AG04449 (cell line): ENCODE measurements at regions of chr21 and their contacts with region 1.

Region 1: DNA sequence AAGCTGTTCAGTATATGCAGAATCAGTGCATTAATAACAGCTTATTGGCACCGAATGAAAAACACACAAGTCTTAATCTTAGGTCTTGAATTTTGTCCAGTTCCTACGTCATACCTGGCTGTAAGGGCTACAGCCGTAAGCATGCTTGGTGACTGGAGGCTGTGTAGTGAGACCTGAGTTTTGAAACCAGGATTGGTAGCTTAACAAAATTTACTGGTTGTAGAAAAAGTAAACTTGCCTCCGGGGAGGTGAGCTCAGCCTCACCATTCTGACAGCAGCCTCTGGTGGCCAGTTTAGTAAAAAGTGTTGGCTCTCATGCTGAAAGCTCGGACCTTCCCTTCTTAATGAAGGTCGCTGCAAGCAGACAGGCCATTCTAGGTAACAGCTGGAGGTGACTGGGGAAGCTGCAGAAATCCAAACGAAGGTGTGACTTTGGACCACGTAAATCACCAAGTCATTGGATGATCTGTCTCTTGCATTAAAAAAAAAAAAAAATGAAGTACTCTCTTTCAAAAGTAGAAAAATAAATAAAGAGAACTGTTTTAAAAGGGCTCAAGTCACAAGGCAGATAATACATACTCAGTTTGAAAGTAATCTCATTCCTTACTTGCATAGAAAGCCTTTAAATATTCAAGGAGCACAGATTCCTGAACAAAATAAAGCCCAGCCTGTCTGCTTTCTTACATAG is 48.9 kb downstream of the HLCS start:
- DNase-seq: no peak
- H3K4me3 ChIP-seq: no peak overlapping the region
- CTCF ChIP-seq: peak; percentile 82

Region 2: DNA sequence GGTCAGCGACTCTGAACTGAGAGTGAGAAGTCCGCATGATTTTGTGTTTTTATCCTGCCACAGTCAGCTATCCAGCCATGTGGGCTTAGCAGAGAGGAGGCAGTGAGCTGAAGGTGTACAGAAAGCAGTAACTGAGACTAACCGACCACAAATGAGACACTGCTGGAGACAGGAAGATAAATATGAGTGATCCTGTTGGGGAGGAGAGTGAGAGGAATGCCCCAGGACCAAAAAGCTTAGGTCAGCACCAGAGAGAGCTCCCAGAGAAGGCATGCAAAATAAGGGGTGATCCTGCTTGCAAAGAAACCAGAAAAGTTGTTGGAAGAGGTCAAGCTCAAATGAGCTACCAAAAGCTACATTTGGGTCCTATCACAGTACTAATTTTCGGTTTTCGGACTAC is 14.8 kb before region 1 on chr21:
- CTCF ChIA-PET with region 1: interaction called, 10 read pairs
- POLR2A ChIA-PET with region 1: no interaction called
- DNase-seq: no peak
- H3K4me3 ChIP-seq: no peak overlapping the region
- CTCF ChIP-seq: no peak